Activated T-helper 1 cell treated with anti-CD3 and anti-CD28 coated beads, Interleukin-12 subunit alpha, Interleukin-12 subunit beta, Interleukin-2, Interleukin-4 antibody, amounts not matched to agents 30 ng/mL and 10 ng/mL and 1 ng/mL, durations not matched to agents 14 hours and 24 hours and 36 hours (primary cell): ENCODE measurements at regions of chr17 and their contacts with region 1.

Region 1: GRCh38 chr17:42287926-42288802 is at the start of gene STAT5A:
- DNase-seq: peak; percentile 77
- H3K4me3 Mint-ChIP-seq: peak within 1 kb of the TSS; percentile 98
- H3K27ac Mint-ChIP-seq: peak within 1 kb of the TSS; percentile 93
- H3K4me1 Mint-ChIP-seq: peaks cover 68% of the 10 kb centered on the region
- H3K27me3 Mint-ChIP-seq: no peaks in the 10 kb centered on the region
- total RNA-seq, gene STAT5A: 375 and 381 TPM in 2 replicates

Region 2: DNA sequence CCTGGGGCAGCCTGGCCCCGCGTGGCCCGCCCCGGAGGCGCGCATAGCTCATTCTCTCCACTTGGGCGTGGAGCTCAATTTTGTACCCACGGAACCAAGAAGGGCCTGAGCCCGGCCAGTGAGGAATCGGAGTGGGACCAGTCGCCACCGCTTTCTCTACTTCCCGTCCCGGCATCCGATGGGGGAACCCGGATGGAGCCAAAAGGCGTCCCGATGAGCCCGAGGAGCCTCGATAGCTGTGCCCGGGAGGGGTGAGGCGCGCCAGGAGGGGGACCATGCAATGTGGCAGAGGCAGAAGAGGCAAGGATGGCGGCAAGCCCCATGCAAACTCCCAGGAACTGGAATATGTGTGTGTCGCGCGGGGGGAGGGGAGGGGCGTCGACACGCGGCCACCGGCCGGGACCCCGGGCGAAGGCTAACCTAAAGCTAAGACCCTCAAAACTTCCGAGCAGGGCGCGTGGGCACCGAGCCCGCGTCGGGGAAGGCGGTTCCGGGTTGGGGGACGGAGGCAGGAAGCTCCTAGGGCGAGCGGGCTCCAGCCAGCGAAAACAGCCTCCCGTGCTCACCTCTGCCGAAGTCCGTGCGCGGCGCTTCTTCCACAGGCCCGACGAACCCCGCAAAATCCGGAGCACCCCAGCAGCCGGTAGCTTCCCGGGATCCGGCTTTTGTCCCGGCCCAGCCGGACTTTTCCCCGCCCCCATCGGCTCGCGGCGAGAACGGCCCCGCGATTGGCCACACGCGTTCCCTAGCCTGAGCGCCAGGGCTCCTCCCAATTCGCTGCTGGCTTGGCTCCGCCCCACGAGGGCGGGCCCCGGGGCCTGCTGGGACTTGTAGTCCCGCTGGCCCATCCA is 369.6 kb before region 1 on chr17 and contains the start of gene ACLY:
- intact Hi-C with region 1: loop called (anchors 5 kb)
- DNase-seq: peak; percentile 98
- H3K4me3 Mint-ChIP-seq: peak within 1 kb of the TSS; percentile 95
- H3K27ac Mint-ChIP-seq: peak within 1 kb of the TSS; percentile 90
- H3K4me1 Mint-ChIP-seq: peaks cover 32% of the 10 kb centered on the region
- H3K27me3 Mint-ChIP-seq: no peaks in the 10 kb centered on the region
- total RNA-seq, gene ACLY: 200 and 211 TPM in 2 replicates

Region 3: DNA sequence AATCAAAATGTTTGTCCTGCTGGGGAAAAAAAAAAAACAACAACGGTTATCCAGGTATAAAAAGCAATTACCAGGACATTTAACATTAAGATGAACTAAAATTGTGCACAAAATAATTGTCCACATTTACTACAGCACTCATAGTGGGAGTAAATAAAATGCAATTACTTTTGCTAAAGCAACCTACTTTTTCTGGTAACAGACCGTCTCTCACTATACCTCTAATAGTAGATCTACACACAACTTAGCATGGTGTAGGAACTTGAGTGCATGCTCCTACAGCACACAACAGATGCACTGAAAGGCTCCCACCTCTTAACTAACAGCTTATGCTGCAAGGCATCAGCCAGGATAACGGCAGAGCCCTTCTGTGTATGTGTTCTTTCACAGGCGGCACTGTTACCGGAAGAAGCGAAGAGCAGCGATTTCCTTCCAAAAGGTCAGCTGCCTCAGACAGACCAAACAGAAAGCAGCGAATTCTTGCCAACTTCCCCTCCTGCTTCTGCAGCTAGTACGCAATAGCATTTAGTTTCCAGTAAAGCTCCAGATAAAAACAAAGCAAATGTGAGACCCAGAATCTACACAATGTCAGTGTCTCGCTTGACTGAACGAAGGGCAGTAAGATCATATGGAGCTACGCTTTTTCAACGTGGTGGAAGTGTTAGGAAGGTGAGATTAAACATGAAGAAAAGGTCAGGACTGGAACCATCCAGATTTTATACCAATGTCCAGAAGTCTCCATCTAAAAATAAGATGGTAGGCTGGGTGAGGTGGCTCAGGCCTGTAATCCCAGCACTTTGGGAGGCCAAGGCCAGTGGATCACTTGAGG is 39.6 kb before region 1 on chr17:
- intact Hi-C with region 1: loop called (anchors 1 kb)
- DNase-seq: peak; percentile 77
- H3K4me3 Mint-ChIP-seq: peak overlapping the region; percentile 89
- H3K27ac Mint-ChIP-seq: peak overlapping the region; percentile 99
- H3K4me1 Mint-ChIP-seq: peaks cover 61% of the 10 kb centered on the region
- H3K27me3 Mint-ChIP-seq: no peaks in the 10 kb centered on the region

Region 4: DNA sequence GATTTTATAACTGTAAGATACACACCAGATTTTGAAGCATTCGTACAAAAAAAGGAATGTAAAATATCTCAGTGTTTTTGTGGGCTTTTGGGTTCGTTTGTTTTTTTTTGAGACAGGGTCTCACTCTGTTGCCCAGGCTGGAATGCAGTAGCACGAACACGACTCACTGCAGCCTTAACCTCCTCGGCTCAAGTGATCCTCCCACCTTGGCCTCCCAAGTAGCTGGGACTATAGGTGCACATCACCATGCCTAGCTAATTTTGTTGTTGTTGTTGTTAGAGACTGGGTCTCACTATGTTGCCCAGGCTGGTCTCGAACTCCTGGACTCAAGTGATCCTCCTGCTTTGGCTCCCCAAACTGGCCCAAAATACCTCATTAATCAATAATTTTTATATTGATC is 27.8 kb before region 1 on chr17:
- intact Hi-C with region 1: no loop called
- DNase-seq: no peak
- H3K4me3 Mint-ChIP-seq: no peak overlapping the region
- H3K27ac Mint-ChIP-seq: no peak overlapping the region
- H3K4me1 Mint-ChIP-seq: peaks cover 10% of the 10 kb centered on the region
- H3K27me3 Mint-ChIP-seq: no peaks in the 10 kb centered on the region

Region 5: DNA sequence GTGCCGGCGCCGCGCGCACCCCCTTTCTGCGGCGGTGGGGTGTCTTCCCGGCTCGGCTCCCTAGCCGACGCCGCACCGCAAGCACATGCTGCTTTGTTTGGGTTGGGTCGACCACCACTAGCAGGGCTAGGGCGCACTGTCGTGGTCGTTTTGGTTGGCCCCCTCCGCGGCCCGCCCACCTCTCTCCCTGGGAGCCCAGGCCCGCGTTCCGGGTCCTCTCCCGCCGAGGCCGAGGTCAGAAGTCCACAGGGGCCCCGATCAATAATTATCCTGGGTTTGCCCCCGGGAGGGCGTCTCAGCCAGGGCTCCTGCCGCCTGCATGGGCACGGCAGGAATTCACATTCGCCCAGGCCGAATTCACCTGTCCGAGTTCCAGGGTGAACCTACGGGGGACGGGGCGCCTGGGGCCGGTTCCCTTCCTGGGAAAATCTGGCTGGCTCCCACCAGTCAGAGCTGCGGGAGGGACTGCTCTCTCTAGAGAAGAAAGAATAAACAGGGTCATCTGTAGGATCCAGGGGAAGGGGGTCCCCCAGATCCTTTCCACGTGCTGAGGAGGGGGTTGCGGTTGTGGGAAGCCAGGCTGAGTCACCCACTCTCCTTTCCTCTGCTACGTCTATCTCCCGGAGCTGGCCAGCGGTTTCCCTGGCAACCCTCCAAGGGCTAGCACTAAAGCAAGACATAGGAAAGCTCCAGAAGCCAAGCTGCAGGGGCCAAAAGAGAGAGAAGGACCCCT is 11.4 kb before region 1 on chr17:
- intact Hi-C with region 1: loop called (anchors 1 kb)
- DNase-seq: no peak
- H3K4me3 Mint-ChIP-seq: peak overlapping the region; percentile 88
- H3K27ac Mint-ChIP-seq: peak overlapping the region; percentile 94
- H3K4me1 Mint-ChIP-seq: peaks cover 43% of the 10 kb centered on the region
- H3K27me3 Mint-ChIP-seq: no peaks in the 10 kb centered on the region

Region 6: DNA sequence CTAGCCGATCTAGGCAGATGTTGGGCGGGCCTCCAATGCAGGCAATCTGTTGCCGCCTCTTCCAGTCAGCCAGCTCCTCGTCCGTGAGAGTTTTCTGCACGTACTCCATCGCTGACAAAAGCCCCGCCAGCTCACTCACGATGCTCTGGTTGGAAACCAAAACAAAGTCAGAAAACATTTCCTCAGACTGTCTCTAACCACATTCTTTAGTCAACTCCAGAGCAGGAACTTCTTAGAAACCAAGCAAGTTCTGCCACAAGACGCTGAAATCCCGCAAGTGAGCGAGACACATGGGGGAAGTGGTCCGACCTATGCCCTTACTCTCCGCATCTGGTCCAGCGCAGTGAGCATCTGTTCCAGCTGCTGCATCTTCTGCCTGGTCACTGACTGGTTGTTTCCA is 49.3 kb after region 1 on chr17:
- intact Hi-C with region 1: loop called (anchors 1 kb)
- DNase-seq: peak; percentile 82
- H3K4me3 Mint-ChIP-seq: peak overlapping the region; percentile 79
- H3K27ac Mint-ChIP-seq: peak overlapping the region; percentile 97
- H3K4me1 Mint-ChIP-seq: peaks cover 76% of the 10 kb centered on the region
- H3K27me3 Mint-ChIP-seq: no peaks in the 10 kb centered on the region

Region 7: GRCh38 chr17:42964161-42964932 is 676.2 kb after region 1 on chr17 and contains the start of gene AARSD1:
- intact Hi-C with region 1: loop called (anchors 10 kb)
- DNase-seq: peak; percentile 90
- H3K4me3 Mint-ChIP-seq: peak within 1 kb of the TSS; percentile 94
- H3K27ac Mint-ChIP-seq: peak within 1 kb of the TSS; percentile 90
- H3K4me1 Mint-ChIP-seq: peaks cover 13% of the 10 kb centered on the region
- H3K27me3 Mint-ChIP-seq: no peaks in the 10 kb centered on the region
- total RNA-seq, gene AARSD1: 78.2 and 85.5 TPM in 2 replicates